ENCODE measurements at regions of chr22 and their contacts with region 1.

Region 1: DNA sequence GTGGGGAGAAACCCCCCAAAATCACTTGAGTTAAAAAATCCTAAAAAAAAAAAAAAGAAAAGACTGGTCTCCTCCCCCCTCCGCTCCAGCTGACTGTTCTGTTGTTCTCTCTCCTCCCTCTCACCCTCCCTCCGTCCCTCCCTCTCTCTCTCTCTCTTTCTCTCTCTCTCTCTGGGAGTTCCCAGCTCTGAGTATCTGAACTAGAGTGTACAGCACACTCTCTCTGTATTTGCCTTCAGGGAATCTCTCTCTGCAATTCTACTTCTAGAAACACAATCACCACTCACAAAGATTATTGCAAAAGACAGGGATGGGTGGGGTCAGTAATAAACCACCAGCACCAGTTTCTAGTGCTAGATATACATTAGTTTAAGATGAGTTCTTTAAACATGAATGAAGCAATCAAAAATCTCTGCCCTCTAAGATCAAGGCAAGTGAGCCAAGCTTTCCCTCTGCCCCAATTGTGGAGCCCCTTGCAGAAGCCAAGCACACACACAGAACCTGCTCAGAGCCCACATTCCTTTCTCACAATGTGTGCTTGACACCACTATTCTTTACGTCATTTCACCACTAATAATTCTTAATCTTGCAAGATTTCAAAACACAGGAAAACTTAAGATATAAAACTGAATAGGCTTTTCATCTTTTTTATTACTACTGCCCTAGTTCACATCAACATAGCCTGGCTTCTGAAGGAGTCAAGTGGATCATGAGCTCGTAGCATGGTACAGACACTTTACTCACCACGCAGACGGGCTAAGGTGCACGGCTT is 133.5 kb downstream of the RBFOX2 start:
- DNase-seq: peak in 1 of 2 donors; percentile 71
- H3K4me3 ChIP-seq: peak overlapping the region; percentile 39 to 67
- H3K27ac ChIP-seq: peak overlapping the region; percentile 76 to 82
- H3K4me1 ChIP-seq: peaks cover 5 to 13% of the 10 kb centered on the region in 2 donors
- H3K27me3 ChIP-seq: no peaks in the 10 kb centered on the region
- CTCF ChIP-seq: no peak

Region 2: GRCh38 chr22:35883031-35883620 is 12.0 kb before region 1 on chr22:
- intact Hi-C with region 1: no loop called
- DNase-seq: no peak
- H3K4me3 ChIP-seq: no peak overlapping the region
- H3K27ac ChIP-seq: peak overlapping the region; percentile 37 to 44
- H3K4me1 ChIP-seq: peaks cover 0 to 9% of the 10 kb centered on the region in 2 donors
- H3K27me3 ChIP-seq: no peaks in the 10 kb centered on the region
- CTCF ChIP-seq: no peak

Region 3: GRCh38 chr22:35914665-35915476 is 19.7 kb after region 1 on chr22:
- intact Hi-C with region 1: loop called (anchors 2 kb)
- DNase-seq: peak in 1 of 2 donors; percentile 77
- H3K4me3 ChIP-seq: peak overlapping the region; percentile 58 to 66
- H3K27ac ChIP-seq: peak overlapping the region; percentile 50 to 83
- H3K4me1 ChIP-seq: peaks cover 7 to 38% of the 10 kb centered on the region in 2 donors
- H3K27me3 ChIP-seq: no peaks in the 10 kb centered on the region
- CTCF ChIP-seq: no peak

Region 4: GRCh38 chr22:35947794-35948425 is 52.8 kb after region 1 on chr22:
- intact Hi-C with region 1: no loop called
- DNase-seq: no peak
- H3K4me3 ChIP-seq: no peak overlapping the region
- H3K27ac ChIP-seq: no peak overlapping the region
- H3K4me1 ChIP-seq: no peaks in the 10 kb centered on the region
- H3K27me3 ChIP-seq: no peaks in the 10 kb centered on the region
- CTCF ChIP-seq: no peak